MCF 10A (cell line): ENCODE measurements at regions of chr17 and their contacts with region 1.

Region 1: DNA sequence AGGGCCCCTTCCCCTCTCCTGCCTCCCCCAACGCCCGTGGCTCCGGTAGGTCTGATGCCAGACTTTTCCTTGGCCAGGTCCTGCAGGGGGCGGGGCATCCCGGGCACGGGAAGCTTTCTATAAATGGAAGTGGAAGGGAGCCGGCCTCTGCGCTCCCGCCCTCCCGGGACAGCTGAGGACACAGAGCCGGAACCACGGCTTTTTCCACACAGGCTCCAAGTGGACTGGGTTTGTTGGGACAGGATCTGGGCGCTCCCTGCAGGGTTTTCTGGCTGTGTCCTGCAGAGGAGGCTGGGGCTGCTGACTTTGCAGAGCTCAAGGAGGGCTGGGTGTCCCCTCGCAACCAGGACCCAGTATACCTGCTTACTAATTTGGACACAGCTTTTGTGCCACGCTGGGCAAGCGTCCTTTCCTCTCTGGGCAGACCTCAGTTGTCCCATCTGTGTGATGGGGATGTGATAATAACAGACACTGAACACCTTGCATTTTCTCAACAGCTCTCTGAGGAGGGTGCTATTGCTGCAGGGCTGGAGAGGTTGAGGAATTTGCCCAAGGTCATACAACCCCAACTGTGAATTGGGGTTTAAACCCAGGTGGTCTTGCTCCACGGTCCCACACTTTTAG is 1.8 kb downstream of the TNS4 start:
- DNase-seq: peak; percentile 90
- H3K4me3 Mint-ChIP-seq: peak overlapping the region; percentile 98
- H3K27ac Mint-ChIP-seq: peak overlapping the region; percentile 97
- H3K4me1 Mint-ChIP-seq: peaks cover 39% of the 10 kb centered on the region
- H3K27me3 Mint-ChIP-seq: no peaks in the 10 kb centered on the region
- CTCF ChIP-seq: no peak

Region 2: DNA sequence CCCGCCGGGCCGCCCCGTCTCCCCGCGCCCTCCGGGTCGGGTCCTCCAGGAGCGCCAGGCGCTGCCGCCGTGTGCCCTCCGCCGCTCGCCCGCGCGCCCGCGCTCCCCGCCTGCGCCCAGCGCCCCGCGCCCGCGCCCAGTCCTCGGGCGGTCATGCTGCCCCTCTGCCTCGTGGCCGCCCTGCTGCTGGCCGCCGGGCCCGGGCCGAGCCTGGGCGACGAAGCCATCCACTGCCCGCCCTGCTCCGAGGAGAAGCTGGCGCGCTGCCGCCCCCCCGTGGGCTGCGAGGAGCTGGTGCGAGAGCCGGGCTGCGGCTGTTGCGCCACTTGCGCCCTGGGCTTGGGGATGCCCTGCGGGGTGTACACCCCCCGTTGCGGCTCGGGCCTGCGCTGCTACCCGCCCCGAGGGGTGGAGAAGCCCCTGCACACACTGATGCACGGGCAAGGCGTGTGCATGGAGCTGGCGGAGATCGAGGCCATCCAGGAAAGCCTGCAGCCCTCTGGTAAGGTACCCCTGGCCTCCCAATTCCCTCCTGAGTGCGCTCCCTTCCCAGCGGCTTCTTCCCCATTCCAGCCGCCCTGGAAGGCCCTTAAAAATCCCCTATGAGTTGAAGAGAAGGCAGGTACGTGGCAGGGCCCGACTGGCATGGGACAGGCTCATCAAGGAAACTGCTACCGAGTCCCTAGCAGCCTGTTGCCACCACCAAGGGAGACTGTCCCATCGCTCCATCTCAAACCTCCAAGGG is 55.9 kb before region 1 on chr17:
- CTCF ChIA-PET with region 1: interaction called, 6 read pairs
- POLR2A ChIA-PET with region 1: interaction called, 3 read pairs
- intact Hi-C with region 1: loop called (anchors 2 kb)
- DNase-seq: peak; percentile 72
- H3K4me3 Mint-ChIP-seq: peak overlapping the region; percentile 65
- H3K27ac Mint-ChIP-seq: no peak overlapping the region
- H3K4me1 Mint-ChIP-seq: peaks cover 21% of the 10 kb centered on the region
- H3K27me3 Mint-ChIP-seq: peaks cover 31% of the 10 kb centered on the region
- CTCF ChIP-seq: peak; percentile 6

Region 3: DNA sequence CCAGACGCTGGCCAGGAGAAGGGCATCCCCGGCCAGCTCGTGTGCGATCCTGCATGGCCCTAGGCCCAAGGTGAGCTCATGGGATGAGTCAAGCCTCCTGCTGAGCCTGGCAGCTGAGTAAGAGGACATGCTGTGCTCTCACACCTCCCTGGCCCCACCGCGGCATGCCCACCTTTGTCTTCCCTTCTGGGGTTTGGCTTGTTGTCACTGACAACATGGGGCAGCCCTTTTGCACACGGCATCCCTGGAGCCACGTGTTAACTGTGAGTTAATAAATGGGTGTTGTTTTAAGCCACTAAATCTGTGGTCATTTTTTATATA is 10.6 kb after region 1 on chr17:
- CTCF ChIA-PET with region 1: interaction called, 6 read pairs
- POLR2A ChIA-PET with region 1: interaction called, 336 read pairs
- intact Hi-C with region 1: no loop called
- DNase-seq: peak; percentile 99
- H3K4me3 Mint-ChIP-seq: peak overlapping the region; percentile 48
- H3K27ac Mint-ChIP-seq: peak overlapping the region; percentile 95
- H3K4me1 Mint-ChIP-seq: peaks cover 56% of the 10 kb centered on the region
- H3K27me3 Mint-ChIP-seq: no peaks in the 10 kb centered on the region
- CTCF ChIP-seq: no peak

Region 4: DNA sequence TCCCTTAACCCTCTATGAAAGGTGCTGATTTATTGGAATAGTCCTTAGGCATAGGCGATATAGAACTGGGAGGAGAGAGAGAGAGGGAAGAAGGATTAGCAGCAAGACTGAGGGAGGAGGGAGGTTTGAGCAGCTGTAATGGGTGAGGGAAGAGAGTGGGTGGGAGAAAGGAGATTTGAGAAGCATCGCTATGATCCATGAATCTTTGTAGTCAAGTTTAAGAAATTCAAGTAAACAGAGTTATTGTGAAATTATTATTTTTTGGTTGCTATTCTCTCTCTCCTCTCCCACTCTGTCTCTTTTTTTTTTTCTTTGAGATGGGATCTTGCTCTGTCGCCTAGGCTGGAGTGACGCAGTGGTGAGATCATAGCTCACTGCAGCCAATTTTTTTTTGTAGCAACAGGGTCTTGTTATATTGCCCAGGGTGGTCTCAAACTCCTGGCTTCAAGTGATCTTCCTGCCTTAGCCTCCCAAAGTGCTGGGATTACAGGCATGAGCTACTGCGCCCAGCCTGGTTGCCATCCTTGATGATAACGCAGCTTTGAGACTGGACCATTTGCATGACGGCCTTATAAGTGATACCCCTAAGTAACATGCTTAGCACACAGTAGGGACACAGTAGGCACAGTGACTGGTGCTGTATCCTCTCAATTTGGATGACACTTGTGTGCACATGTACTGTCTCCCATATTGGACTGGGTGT is 22.7 kb after region 1 on chr17:
- CTCF ChIA-PET with region 1: interaction called, 8 read pairs
- POLR2A ChIA-PET with region 1: interaction called, 614 read pairs
- intact Hi-C with region 1: loop called (anchors 1 kb)
- DNase-seq: peak; percentile 53
- H3K4me3 Mint-ChIP-seq: peak overlapping the region; percentile 62
- H3K27ac Mint-ChIP-seq: peak overlapping the region; percentile 99
- H3K4me1 Mint-ChIP-seq: peaks cover 57% of the 10 kb centered on the region
- H3K27me3 Mint-ChIP-seq: no peaks in the 10 kb centered on the region
- CTCF ChIP-seq: no peak

Region 5: GRCh38 chr17:40551879-40552768 is 52.5 kb after region 1 on chr17:
- CTCF ChIA-PET with region 1: no interaction called
- POLR2A ChIA-PET with region 1: interaction called, 27 read pairs
- intact Hi-C with region 1: no loop called
- DNase-seq: peak; percentile 65
- H3K4me3 Mint-ChIP-seq: no peak overlapping the region
- H3K27ac Mint-ChIP-seq: no peak overlapping the region
- H3K4me1 Mint-ChIP-seq: peaks cover 32% of the 10 kb centered on the region
- H3K27me3 Mint-ChIP-seq: no peaks in the 10 kb centered on the region
- CTCF ChIP-seq: no peak

Region 6: DNA sequence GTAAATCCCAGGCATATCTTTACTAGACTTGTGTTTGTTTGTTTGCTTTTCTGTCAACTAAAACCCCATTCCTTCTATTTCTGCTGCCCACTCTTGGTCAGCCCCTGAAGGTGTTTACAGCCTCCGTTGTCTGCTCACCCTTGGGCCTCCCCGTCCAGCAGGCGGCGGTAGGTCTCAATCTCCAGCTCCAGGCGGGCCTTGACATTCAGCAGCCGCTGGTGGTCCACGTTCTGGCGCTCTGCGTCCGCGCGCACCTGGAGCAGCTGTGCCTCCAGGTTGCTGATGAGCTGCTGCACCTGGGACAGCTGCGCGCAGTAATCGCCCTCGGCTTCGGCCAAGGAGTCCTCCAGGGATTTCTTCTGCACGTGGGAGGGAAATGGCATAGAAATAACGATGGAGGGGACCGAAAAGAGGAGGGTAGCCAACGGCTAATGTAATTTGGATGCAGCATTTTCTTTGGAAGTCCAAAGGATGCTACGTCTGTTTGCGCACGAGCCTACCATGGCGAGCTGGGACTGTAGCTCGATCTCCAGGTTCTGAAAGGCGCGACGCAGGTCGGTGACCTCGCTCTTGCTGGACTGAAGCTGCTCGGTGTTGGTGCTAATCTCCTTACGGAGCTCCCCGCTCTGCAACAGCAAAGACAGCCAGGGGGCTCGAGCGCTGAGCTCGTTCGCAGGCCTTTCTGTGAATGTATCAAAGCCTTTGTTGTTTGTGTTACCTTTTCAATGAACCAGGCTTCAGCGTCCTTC is 363.5 kb after region 1 on chr17:
- CTCF ChIA-PET with region 1: no interaction called
- POLR2A ChIA-PET with region 1: no interaction called
- intact Hi-C with region 1: no loop called
- DNase-seq: no peak
- H3K4me3 Mint-ChIP-seq: no peak overlapping the region
- H3K27ac Mint-ChIP-seq: no peak overlapping the region
- H3K4me1 Mint-ChIP-seq: no peaks in the 10 kb centered on the region
- H3K27me3 Mint-ChIP-seq: no peaks in the 10 kb centered on the region
- CTCF ChIP-seq: no peak